ENCODE measurements at regions of chr1 and their contacts with region 1.

Region 1: GRCh38 chr1:37514350-37515184 is at the start of gene MEAF6:
- DNase-seq: peak; percentile 37
- H3K4me3 ChIP-seq: peak within 1 kb of the TSS; percentile 84
- H3K27ac ChIP-seq: peak within 1 kb of the TSS; percentile 83
- H3K27me3 ChIP-seq: no peaks in the 10 kb centered on the region
- CTCF ChIP-seq: peak; percentile 29; the same call in 1 of the 2 replicates
- polyA plus RNA-seq, gene MEAF6: 59.6 and 69.6 TPM in 2 replicates

Region 2: GRCh38 chr1:37449936-37450335 is 64.6 kb before region 1 on chr1:
- CTCF ChIA-PET with region 1: interaction called, 29 read pairs
- POLR2A ChIA-PET with region 1: interaction called, 3 read pairs
- DNase-seq: no peak
- H3K4me3 ChIP-seq: no peak overlapping the region
- H3K27ac ChIP-seq: no peak overlapping the region
- H3K27me3 ChIP-seq: peaks cover 7% of the 10 kb centered on the region
- CTCF ChIP-seq: no peak

Region 3: GRCh38 chr1:37498872-37499617 is 15.5 kb before region 1 on chr1:
- CTCF ChIA-PET with region 1: interaction called, 76 read pairs
- POLR2A ChIA-PET with region 1: no interaction called
- DNase-seq: no peak
- H3K4me3 ChIP-seq: no peak overlapping the region
- H3K27ac ChIP-seq: no peak overlapping the region
- H3K27me3 ChIP-seq: no peaks in the 10 kb centered on the region
- CTCF ChIP-seq: no peak

Region 4: GRCh38 chr1:37549341-37549740 is 34.8 kb after region 1 on chr1:
- CTCF ChIA-PET with region 1: interaction called, 22 read pairs
- POLR2A ChIA-PET with region 1: interaction called, 7 read pairs
- DNase-seq: no peak
- H3K4me3 ChIP-seq: no peak overlapping the region
- H3K27ac ChIP-seq: no peak overlapping the region
- H3K27me3 ChIP-seq: no peaks in the 10 kb centered on the region
- CTCF ChIP-seq: no peak

Region 5: GRCh38 chr1:37574834-37575480 is 60.4 kb after region 1 on chr1:
- CTCF ChIA-PET with region 1: interaction called, 14 read pairs
- POLR2A ChIA-PET with region 1: no interaction called
- DNase-seq: peak; percentile 58
- H3K4me3 ChIP-seq: no peak overlapping the region
- H3K27ac ChIP-seq: peak overlapping the region; percentile 76
- H3K27me3 ChIP-seq: no peaks in the 10 kb centered on the region
- CTCF ChIP-seq: no peak

Measured in AG04450 (cell line).